H1 (cell line): ENCODE measurements at regions of chr13 and their contacts with region 1.

Region 1: GRCh38 chr13:103754783-103755182 is 688.6 kb upstream of the SLC10A2 start:
- DNase-seq: no peak
- H3K4me3 ChIP-seq: no peak overlapping the region
- H3K27ac ChIP-seq: no peak overlapping the region
- H3K4me1 ChIP-seq: no peaks in the 10 kb centered on the region
- H3K27me3 ChIP-seq: no peaks in the 10 kb centered on the region
- CTCF ChIP-seq: no peak
- EP300 ChIP-seq: no peak
- POLR2A ChIP-seq: no peak
- RAD21 ChIP-seq: no peak

Region 2: GRCh38 chr13:103772576-103772975 is 17.8 kb after region 1 on chr13:
- CTCF ChIA-PET with region 1: interaction called, 11 read pairs
- POLR2A ChIA-PET with region 1: no interaction called
- DNase-seq: no peak
- H3K4me3 ChIP-seq: no peak overlapping the region
- H3K27ac ChIP-seq: no peak overlapping the region
- H3K4me1 ChIP-seq: no peaks in the 10 kb centered on the region
- H3K27me3 ChIP-seq: no peaks in the 10 kb centered on the region
- CTCF ChIP-seq: peak; percentile 23 to 50 (median 40); a peak in 3 of 4 replicates
- EP300 ChIP-seq: no peak
- POLR2A ChIP-seq: no peak
- RAD21 ChIP-seq: peak; percentile 62 to 68; a peak in 3 of 4 replicates

Region 3: GRCh38 chr13:103852036-103852435 is 97.3 kb after region 1 on chr13:
- CTCF ChIA-PET with region 1: no interaction called
- POLR2A ChIA-PET with region 1: no interaction called
- DNase-seq: no peak
- H3K4me3 ChIP-seq: no peak overlapping the region
- H3K27ac ChIP-seq: no peak overlapping the region
- H3K4me1 ChIP-seq: no peaks in the 10 kb centered on the region
- H3K27me3 ChIP-seq: no peaks in the 10 kb centered on the region
- CTCF ChIP-seq: no peak
- EP300 ChIP-seq: no peak
- POLR2A ChIP-seq: no peak
- RAD21 ChIP-seq: no peak

Region 4: GRCh38 chr13:103965506-103966243 is 210.9 kb after region 1 on chr13:
- CTCF ChIA-PET with region 1: no interaction called
- POLR2A ChIA-PET with region 1: no interaction called
- DNase-seq: no peak
- H3K4me3 ChIP-seq: no peak overlapping the region
- H3K27ac ChIP-seq: no peak overlapping the region
- H3K4me1 ChIP-seq: no peaks in the 10 kb centered on the region
- H3K27me3 ChIP-seq: peaks cover 0 to 1% (median 0%) of the 10 kb centered on the region in 4 experiments; a peak in 1 of 7 replicates
- CTCF ChIP-seq: no peak
- EP300 ChIP-seq: no peak
- POLR2A ChIP-seq: no peak
- RAD21 ChIP-seq: no peak